ENCODE measurements at regions of chr11 and their contacts with region 1.

Region 1: DNA sequence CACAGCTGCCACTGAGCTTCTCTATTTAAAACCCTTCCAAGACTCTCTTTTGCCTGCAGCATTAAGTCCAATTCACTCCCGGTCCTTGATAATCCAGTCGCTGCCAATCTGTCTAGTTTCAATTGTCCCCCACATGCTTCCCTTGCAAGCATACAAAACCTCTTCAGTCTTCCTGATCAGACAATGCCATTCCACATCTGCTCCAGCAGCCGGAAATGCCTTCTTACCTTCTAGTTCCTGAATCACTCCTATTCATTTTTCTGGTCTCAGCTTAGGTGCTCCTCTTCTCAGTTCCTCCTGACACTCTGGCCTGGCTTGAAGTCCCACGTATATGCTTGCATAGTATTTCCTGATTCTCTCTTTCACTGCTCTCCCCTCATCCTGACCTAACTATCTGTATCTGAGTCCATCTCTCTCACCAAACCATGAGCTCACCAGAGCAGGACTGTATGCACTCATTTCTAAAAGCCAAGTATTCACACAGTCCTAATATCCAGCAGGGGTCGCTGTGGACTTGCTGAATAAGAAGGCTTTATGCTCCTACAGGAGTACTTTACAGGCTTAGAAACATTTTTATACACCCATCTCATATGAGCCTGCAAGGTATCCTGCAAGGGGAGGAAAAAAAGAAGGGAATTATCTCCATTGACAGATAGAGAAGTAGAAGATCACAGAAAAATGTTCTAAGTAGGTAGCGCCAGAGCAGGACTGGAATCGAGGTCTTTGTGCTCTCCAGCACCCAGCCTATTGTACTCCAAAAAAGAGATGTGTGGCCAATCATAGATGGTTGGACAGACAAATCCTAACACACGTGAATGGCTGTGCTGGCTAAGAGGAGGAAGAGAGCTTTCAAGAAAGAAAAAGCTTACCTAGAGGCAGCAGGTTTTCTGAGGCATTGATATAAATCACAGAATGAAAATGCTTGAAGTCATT is 19.2 kb downstream of the XRRA1 start:
- DNase-seq: peak; percentile 75 to 92 (median 82)
- H3K4me3 ChIP-seq: no peak overlapping the region
- H3K27ac ChIP-seq: no peak overlapping the region
- H3K4me1 ChIP-seq: no peaks in the 10 kb centered on the region
- H3K27me3 ChIP-seq: no peaks in the 10 kb centered on the region
- CTCF ChIP-seq: peak; percentile 78 to 92 (median 90)
- POLR2A ChIP-seq: no peak

Region 2: GRCh38 chr11:74748211-74749127 is 181.2 kb before region 1 on chr11 and contains the start of gene RNF169:
- intact Hi-C with region 1: no loop called
- DNase-seq: peak; percentile 92 to 99 (median 97)
- H3K4me3 ChIP-seq: peak within 1 kb of the TSS in 2 of 4 donors; percentile 69 to 70
- H3K27ac ChIP-seq: peak within 1 kb of the TSS; percentile 48 to 96 (median 91)
- H3K4me1 ChIP-seq: peaks cover 15 to 38% of the 10 kb centered on the region in 2 donors
- H3K27me3 ChIP-seq: no peaks in the 10 kb centered on the region
- CTCF ChIP-seq: no peak
- POLR2A ChIP-seq: peak; percentile 58 to 82
- total RNA-seq, gene RNF169: 7.5 to 17.8 (median 12.6) TPM

Region 3: DNA sequence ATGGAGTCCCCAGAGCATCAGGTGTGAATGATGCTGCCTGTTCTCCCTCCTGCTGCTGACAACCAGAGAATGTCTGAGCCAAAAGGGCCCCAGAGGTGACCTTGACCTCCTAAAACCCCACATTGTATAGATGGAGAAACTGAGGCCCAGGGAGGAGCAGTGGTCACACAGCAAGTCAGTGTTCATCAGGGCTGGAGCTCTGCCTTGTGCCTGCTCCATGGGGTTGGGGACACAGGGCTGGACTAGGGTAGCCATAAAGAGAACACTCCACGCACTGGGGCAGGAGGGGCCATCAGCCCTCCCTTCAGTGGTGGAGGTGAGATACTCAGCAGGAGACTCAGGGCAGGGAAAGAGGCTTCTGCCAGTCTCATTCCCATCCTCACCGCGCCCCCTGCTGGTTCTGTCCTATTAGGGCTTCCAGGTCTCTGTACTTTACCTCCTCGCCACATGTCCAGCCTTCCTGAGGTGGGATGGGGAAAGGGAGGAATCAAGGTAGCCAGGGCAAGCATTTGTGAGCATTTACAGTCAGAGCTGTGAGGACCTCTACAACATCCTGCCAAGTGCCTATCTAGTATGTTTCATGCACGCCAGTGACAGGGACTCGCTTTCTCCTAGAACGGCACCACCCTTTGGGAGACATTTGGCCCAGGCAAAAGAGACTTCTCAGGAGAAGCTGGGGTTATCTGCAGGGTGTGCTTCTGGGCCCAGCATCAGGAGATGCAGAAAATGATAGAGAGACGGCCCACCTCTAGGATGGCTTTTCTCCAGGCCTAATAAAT is 102.3 kb after region 1 on chr11:
- intact Hi-C with region 1: loop called (anchors 5 kb)
- DNase-seq: peak; percentile 84 to 95 (median 90)
- H3K4me3 ChIP-seq: no peak overlapping the region
- H3K27ac ChIP-seq: peak overlapping the region; percentile 65 to 94 (median 91)
- H3K4me1 ChIP-seq: peaks cover 15% of the 10 kb centered on the region in 2 donors
- H3K27me3 ChIP-seq: no peaks in the 10 kb centered on the region
- CTCF ChIP-seq: peak; percentile 57 to 87 (median 82)
- POLR2A ChIP-seq: no peak

Measured in adrenal gland (tissue), 19 donors.